ENCODE measurements at regions of chr1 and their contacts with region 1.

Region 1: DNA sequence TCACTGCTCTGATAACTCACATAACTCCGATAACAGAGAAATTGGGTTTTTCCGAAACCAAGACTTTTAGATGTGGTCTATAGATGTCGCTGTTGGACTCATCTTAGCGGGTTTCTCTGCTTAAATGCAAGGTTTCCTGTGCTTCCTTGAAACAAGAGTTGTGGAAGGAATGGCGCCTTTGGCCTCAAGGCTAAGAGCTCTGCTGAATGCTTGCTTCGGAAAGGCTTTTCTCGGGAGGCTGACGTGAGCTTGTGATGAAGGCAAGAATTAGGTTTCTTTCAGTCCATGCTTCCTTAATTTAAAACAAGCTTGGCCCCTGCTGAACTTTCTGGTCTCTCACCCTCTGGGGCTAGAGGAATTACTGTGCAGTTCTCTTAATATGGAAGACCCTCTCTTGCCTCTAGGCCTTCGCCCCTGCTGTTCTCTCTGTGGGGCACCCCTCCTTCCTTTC is 113.5 kb downstream of the MAP3K21 start:
- DNase-seq: peak in 4 of 5 donors; percentile 1 to 29 (median 14)
- H3K4me3 ChIP-seq: no peak overlapping the region
- H3K4me3 Mint-ChIP-seq: no peak overlapping the region
- H3K27ac ChIP-seq: no peak overlapping the region
- H3K27ac Mint-ChIP-seq: no peak overlapping the region
- H3K4me1 ChIP-seq: no peaks in the 10 kb centered on the region
- H3K4me1 Mint-ChIP-seq: peaks cover 0 to 5% (median 0%) of the 10 kb centered on the region in 4 donors
- H3K27me3 ChIP-seq: no peaks in the 10 kb centered on the region
- H3K27me3 Mint-ChIP-seq: peaks cover 5 to 15% of the 10 kb centered on the region in 2 donors

Region 2: DNA sequence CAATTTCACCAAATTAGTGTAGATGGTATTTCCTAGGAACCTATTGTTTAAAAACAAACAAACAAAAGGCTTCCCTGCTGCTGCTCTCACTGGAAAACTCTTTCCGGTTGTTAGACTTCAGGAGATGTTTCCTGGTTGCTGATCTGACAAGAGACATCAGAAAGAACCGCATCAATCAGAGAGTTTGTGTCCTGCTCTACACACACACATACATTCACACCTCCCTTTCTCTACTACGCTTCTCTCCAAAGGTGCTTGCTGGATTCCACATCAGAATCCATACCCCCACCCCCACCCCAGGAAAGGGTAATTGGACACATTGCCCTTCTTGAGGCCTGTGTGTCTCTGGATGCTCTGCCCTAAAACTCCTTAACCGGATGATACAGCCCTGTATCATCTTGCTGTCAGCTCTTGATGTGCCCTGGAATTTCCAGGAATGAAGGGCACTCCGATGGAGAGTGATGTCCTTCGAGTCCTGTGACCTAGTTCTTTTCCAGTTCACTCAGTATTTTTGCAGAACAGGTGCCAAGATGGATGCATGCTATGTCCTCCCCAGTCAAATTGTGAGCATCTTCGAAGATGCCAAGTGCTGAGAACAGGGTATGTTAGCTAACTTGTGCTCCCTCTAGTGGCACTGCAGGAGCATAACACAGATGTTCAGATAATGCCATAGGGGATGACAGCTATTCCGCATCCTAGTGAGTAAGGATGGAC is 349.8 kb after region 1 on chr1:
- CTCF ChIA-PET with region 1: interaction called, 3 read pairs
- POLR2A ChIA-PET with region 1: no interaction called
- intact Hi-C with region 1: loop called (anchors 2 kb)
- DNase-seq: peak in 4 of 5 donors; percentile 28 to 44 (median 34)
- H3K4me3 ChIP-seq: no peak overlapping the region
- H3K4me3 Mint-ChIP-seq: no peak overlapping the region
- H3K27ac ChIP-seq: no peak overlapping the region
- H3K27ac Mint-ChIP-seq: no peak overlapping the region
- H3K4me1 ChIP-seq: no peaks in the 10 kb centered on the region
- H3K4me1 Mint-ChIP-seq: no peaks in the 10 kb centered on the region
- H3K27me3 ChIP-seq: no peaks in the 10 kb centered on the region
- H3K27me3 Mint-ChIP-seq: peaks cover 9 to 18% of the 10 kb centered on the region in 2 donors

Region 3: DNA sequence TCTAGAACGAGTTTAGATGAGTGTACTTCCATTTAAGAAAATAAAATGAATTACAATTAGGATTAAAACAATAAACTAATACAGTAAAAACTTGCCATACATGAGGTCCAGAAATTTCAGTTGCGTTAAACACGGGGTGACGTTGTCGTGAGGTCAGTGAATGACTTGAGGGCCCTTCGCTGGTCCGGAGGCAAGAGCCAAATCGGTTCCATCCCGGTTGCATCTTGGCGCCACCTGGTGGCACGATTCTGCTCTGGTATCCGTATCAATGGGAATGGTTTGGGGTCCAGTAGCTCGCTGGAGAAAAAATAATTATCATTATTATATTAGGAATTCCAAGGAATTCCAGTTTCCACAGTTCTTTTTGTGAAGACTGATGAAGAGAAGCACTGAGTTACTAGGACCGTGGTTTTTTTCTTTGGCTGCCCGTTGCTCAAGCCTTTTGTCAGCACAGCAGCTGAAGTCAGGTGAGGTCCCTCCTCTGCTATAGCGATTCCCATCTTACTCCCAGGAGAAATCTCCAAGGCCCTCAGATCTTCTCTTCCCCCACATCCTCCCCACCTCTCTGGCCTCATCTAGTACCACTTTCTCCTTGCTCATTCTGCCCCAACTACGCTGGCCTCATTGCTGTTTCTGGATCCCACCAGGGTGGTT is 624.9 kb after region 1 on chr1:
- CTCF ChIA-PET with region 1: interaction called, 5 read pairs
- POLR2A ChIA-PET with region 1: no interaction called
- intact Hi-C with region 1: loop called (anchors 5 kb)
- DNase-seq: peak; percentile 38 to 54 (median 41)
- H3K4me3 ChIP-seq: no peak overlapping the region
- H3K4me3 Mint-ChIP-seq: no peak overlapping the region
- H3K27ac ChIP-seq: no peak overlapping the region
- H3K27ac Mint-ChIP-seq: no peak overlapping the region
- H3K4me1 ChIP-seq: no peaks in the 10 kb centered on the region
- H3K4me1 Mint-ChIP-seq: peaks cover 0 to 8% (median 3%) of the 10 kb centered on the region in 4 donors
- H3K27me3 ChIP-seq: no peaks in the 10 kb centered on the region
- H3K27me3 Mint-ChIP-seq: peaks cover 6% of the 10 kb centered on the region in 2 donors